Activated naive CD4-positive, alpha-beta T cell treated with anti-CD3 and anti-CD28 coated beads for 36 hours (primary cell): ENCODE measurements at regions of chr1 and their contacts with region 1.

Region 1: DNA sequence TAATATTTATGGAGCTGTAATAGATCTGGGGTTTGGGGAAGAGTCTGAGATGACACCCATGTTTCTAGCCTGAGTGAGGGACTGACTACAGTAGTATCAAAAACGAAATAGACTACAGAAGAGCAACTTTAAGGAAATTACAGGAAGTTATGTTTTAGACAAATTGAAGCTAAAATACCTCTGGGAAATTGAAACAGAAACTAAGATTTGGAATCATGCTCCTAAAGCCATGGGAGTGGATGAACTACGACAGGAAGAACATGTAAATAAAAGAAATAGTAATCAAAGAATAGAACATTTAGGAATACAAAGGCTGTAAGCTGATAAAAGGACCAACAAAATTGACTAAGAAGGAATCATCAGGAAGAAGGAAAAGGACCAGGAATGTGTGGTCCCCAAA is 68.9 kb downstream of the KIAA0319L start:
- DNase-seq: no peak
- H3K4me3 Mint-ChIP-seq: no peak overlapping the region
- H3K27ac Mint-ChIP-seq: no peak overlapping the region
- H3K4me1 Mint-ChIP-seq: peaks cover 12% of the 10 kb centered on the region
- H3K27me3 Mint-ChIP-seq: no peaks in the 10 kb centered on the region

Region 2: GRCh38 chr1:35532497-35533223 is 44.3 kb after region 1 on chr1:
- CTCF ChIA-PET with region 1: no interaction called
- intact Hi-C with region 1: loop called (anchors 1 kb)
- DNase-seq: no peak
- H3K4me3 Mint-ChIP-seq: no peak overlapping the region
- H3K27ac Mint-ChIP-seq: no peak overlapping the region
- H3K4me1 Mint-ChIP-seq: peaks cover 37% of the 10 kb centered on the region
- H3K27me3 Mint-ChIP-seq: no peaks in the 10 kb centered on the region